GM12878 (cell line): ENCODE measurements at regions of chr12 and their contacts with region 1.

Region 1: GRCh38 chr12:24534622-24535021 is 414.3 kb downstream of the BCAT1 start:
- DNase-seq: no peak
- ATAC-seq: no peak
- H3K4me3 ChIP-seq: no peak overlapping the region
- H3K27ac ChIP-seq: no peak overlapping the region
- H3K4me1 ChIP-seq: no peaks in the 10 kb centered on the region
- H3K27me3 ChIP-seq: no peaks in the 10 kb centered on the region; a peak in 1 of 4 replicates
- CTCF ChIP-seq: no peak
- EP300 ChIP-seq: no peak
- POLR2A ChIP-seq: no peak
- RAD21 ChIP-seq: no peak

Region 2: GRCh38 chr12:24499151-24500146 is 35.2 kb before region 1 on chr12:
- CTCF ChIA-PET with region 1: no interaction called
- POLR2A ChIA-PET with region 1: no interaction called
- RAD21 ChIA-PET with region 1: no interaction called
- SMC1A ChIA-PET with region 1: no interaction called
- in situ Hi-C with region 1: no loop called
- intact Hi-C with region 1: loop called (anchors 1 kb)
- DNase-seq: no peak
- ATAC-seq: no peak
- H3K4me3 ChIP-seq: no peak overlapping the region
- H3K27ac ChIP-seq: no peak overlapping the region
- H3K4me1 ChIP-seq: no peaks in the 10 kb centered on the region
- H3K27me3 ChIP-seq: 0 out of 4 replicates have a peak, but pooled peaks cover 0 to 2% of the 10 kb centered on the region in 2 experiments
- CTCF ChIP-seq: no peak
- EP300 ChIP-seq: no peak
- POLR2A ChIP-seq: no peak
- RAD21 ChIP-seq: no peak